ENCODE measurements at regions of chr13 and their contacts with region 1.

Region 1: DNA sequence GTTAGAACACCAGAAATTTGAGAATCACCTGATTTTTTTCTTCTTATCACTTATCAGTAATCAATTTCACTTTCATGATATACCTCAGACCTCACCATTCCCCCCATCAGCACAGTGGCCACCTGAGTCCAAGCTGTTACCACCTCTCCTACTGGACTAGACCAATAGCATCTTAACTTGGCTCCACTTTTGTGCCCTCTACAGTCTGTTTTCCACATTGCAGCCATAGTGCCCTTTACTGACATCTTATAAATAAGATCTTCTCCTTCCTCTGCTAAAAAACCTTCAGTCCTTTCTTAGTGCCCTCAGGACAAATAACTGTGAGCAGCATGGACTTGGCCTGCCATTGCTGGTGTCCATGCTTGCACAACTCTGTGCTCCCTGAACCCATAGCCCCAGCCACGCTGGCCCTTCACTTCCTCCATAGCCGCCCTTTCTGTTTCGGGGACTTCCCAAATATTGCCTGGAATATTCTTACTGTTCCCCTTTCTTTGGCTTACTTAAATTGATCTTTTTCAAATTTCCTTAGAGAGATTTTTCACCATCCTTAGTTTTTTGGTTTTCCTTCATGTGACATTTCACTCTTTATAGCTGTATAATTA is 380.8 kb downstream of the LMO7 start:
- DNase-seq: peak; percentile 24
- ATAC-seq: no peak

Region 2: GRCh38 chr13:75530536-75530935 is 486.4 kb before region 1 on chr13:
- intact Hi-C with region 1: no loop called
- DNase-seq: no peak
- ATAC-seq: peak; percentile 25

Region 3: DNA sequence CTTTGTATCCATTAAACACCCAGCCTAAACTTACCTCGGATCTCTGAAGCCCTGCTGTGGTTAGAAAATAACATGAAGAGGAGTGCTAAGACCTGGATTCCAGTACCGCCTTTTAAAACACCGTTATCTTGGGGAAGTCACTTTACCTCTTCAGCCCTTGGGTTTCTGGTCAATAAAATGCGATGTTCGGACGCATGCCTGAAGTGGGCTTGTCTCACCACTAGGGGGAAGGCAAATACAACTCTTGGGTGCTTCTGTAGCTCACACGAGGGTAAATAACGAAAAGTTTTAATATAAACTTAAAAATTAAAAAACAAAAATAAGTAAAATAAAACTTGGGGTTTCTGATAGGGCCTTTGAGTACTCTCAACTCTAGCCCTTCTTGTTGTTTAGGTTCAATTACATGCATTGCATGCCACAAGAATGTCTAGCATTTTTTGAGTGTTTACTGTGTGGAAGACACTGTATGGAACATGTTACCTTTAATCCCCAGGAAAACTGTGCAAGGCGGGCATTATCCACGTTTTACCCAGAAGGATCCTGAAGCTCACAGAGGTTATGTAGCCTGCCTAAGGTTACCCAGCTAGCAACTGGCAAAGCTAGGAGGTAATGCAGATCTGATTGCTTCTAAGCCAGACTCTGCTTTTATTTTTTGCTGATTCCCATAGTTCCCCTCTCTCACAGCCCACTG is 140.4 kb before region 1 on chr13:
- intact Hi-C with region 1: loop called (anchors 10 kb)
- DNase-seq: peak; percentile 43
- ATAC-seq: peak; percentile 97

Region 4: GRCh38 chr13:75908141-75908540 is 108.8 kb before region 1 on chr13:
- intact Hi-C with region 1: loop called (anchors 10 kb)
- DNase-seq: peak; percentile 53
- ATAC-seq: peak; percentile 90

Region 5: DNA sequence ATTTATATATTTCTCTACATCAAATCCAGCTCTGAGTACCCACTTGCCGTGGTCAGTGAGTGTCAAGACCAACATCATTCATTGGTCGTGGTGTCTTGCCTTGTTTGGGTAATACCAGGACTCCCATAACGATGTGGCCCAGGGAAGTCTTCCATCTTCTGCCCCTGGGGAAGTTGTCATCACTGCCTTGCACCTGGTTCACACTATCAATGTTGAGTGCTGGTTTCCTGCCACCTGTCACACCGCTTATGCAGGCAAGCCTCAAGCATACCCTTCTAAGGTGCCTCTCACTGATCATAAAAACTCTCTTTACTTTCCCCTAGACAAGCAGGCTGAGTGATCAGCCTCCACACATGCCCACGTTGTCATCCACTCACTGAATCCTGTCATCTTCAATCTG is 486.9 kb after region 1 on chr13:
- intact Hi-C with region 1: no loop called
- DNase-seq: no peak
- ATAC-seq: no peak

Measured in Right ventricle myocardium superior (tissue), 1 donor.